RWPE1 (cell line): ENCODE measurements at regions of chr3 and their contacts with region 1.

Region 1: DNA sequence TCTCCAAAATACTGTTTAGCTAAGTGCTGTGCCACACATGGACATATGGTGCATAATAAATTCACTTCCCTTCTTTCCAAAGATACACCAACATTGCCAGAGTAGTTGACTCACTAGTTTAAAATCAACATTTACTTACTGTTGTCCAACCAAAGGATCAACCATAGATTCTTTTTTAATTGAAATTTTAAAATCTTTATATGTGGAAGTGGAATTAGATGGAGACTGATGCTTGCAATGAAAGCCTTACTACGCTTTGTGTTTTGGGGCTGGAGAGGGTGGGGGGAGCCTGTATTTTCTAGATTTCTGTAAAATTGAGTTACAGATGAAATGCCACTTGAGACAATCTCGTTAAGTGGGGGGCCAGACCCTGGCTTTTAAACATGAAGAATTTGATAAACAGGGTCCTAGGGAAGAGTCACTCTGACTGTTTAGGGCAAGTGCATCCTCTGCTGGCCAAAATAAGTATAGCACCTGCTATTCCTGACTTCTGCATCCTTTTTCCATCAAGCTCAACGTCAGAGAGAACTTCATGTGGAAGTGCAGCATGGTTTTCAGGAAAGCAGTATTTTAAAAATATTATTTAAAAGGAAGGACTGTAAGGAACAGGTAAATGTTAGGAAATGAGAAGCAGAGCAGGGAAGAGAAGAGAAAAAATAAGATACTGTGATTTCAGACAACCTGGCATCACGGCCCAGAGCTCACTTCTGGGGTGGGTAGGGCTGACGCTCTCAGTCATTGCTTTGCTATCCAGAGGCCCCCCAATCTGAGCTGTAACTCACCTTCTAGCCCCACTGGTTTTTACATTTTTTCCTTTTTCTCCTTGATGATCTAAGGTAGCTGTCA is 76.7 kb downstream of the BOC start:
- DNase-seq: peak; percentile 49
- H3K27ac ChIP-seq: no peak overlapping the region
- CTCF ChIP-seq: peak; percentile 98

Region 2: DNA sequence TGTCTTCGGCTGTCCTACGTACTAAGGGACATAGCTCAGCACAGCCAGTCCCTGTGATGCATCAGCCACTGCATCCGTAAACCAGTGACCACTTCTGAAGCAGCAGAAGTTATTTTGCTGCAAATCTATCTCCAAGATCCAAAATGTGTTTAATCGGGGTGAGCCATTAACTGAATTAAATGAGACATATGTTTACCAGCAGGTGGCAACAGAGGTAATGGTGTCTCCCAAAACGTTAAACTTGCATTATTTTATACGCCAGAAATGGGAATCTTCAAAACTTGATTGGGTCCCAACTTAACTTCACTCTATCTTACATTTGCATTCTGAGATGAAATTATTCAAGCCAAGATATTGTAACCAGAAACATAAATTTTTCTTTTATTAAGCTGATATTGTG is 152.0 kb before region 1 on chr3:
- CTCF ChIA-PET with region 1: interaction called, 17 read pairs
- POLR2A ChIA-PET with region 1: no interaction called
- DNase-seq: peak; percentile 36
- H3K27ac ChIP-seq: no peak overlapping the region
- CTCF ChIP-seq: peak; percentile 43

Region 3: DNA sequence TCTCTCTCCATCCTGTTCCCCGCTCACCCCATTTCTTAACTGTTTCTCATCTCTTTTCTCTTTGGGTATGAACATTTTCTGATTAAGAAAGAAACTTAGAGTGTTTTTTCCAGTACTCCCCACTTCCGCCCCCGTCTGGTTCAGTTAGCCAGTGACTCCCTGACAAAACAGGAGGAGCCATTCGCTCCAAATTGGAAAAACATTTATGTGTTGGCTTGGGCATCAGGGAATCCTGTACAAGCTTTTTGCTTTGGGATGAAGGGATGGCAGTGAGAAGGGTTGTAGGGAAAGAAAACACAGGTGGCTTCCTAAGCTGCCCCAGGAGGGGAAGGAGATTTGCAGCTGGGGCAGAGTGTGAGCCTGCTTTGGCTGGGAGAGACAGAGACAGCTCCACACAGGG is 29.7 kb before region 1 on chr3:
- CTCF ChIA-PET with region 1: no interaction called
- POLR2A ChIA-PET with region 1: no interaction called
- DNase-seq: no peak
- H3K27ac ChIP-seq: no peak overlapping the region
- CTCF ChIP-seq: no peak